GM10248 (cell line): ENCODE measurements at regions of chr2 and their contacts with region 1.

Region 1: GRCh38 chr2:178496049-178496448 is 15.8 kb downstream of the PLEKHA3 start:
- DNase-seq: no peak
- CTCF ChIP-seq: no peak

Region 2: GRCh38 chr2:178256382-178257042 is 239.5 kb before region 1 on chr2:
- CTCF ChIA-PET with region 1: no interaction called
- POLR2A ChIA-PET with region 1: no interaction called
- DNase-seq: no peak
- CTCF ChIP-seq: no peak

Region 3: DNA sequence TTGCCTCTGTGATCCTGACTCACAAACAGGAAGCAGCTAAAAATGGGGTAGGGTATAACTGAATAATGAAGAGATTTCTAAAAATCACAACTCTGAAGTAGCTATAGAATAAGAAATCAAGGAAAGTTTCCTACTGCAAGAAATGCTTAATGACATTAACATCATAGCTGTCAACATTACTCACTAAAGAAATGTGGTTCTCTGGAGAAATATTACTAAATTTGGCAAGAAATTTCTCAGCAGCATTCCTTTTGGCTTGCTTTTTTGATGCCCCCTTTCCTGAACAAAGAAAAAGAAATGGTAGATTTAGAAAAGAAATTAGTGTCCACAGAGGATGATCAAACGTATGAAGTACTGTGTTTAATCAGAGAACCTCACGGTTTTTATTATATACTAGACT is 54.6 kb before region 1 on chr2:
- CTCF ChIA-PET with region 1: no interaction called
- POLR2A ChIA-PET with region 1: no interaction called
- DNase-seq: no peak
- CTCF ChIP-seq: no peak

Region 4: GRCh38 chr2:178506524-178506923 is 10.5 kb after region 1 on chr2:
- CTCF ChIA-PET with region 1: interaction called, 16 read pairs
- POLR2A ChIA-PET with region 1: no interaction called
- DNase-seq: no peak
- CTCF ChIP-seq: no peak